ENCODE measurements at regions of chr3 and their contacts with region 1.

Region 1: GRCh38 chr3:123584988-123585937 is at the start of gene HACD2:
- DNase-seq: peak; percentile 99
- ATAC-seq: peak; percentile 86
- H3K4me3 ChIP-seq: peak within 1 kb of the TSS; percentile 85
- H3K27ac ChIP-seq: peak within 1 kb of the TSS; percentile 83
- H3K4me1 ChIP-seq: peaks cover 35% of the 10 kb centered on the region
- H3K27me3 ChIP-seq: no peaks in the 10 kb centered on the region
- CTCF ChIP-seq: no peak
- total RNA-seq, gene HACD2: 43.8 and 47.3 TPM in 2 replicates

Region 2: GRCh38 chr3:123480428-123480827 is 104.8 kb before region 1 on chr3:
- CTCF ChIA-PET with region 1: no interaction called
- POLR2A ChIA-PET with region 1: no interaction called
- intact Hi-C with region 1: no loop called
- DNase-seq: no peak
- ATAC-seq: no peak
- H3K4me3 ChIP-seq: no peak overlapping the region
- H3K27ac ChIP-seq: no peak overlapping the region
- H3K4me1 ChIP-seq: no peaks in the 10 kb centered on the region
- H3K27me3 ChIP-seq: peaks cover 42% of the 10 kb centered on the region
- CTCF ChIP-seq: no peak

Region 3: DNA sequence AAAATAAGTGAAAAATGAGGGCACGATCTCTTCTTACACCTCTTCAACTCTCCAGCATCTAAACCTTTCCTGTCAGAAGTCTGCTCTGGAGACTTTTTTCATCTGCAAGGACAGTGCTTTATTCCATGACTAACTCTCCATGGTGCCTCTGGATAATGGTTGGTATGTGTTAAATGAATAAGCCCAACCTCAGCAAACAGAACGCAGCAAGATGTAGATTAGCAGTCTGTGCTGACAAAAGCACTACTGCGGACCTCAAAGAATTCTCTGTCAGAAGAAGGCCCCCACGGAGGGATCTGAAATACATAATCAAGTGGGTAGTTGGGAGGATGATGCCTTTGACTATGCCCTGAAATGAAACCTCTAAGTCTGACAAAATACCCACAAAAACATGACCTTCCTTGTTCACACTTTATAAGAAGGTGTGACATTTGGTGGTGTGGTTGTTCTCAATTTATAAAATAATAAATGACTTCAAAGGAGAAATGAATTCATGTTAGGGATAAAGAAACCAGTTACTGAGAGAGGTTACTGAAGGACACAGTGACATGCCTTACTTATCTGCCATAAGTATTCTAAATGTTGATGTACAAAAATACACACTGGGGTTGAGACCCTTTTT is 93.2 kb before region 1 on chr3:
- CTCF ChIA-PET with region 1: no interaction called
- POLR2A ChIA-PET with region 1: no interaction called
- intact Hi-C with region 1: no loop called
- DNase-seq: no peak
- ATAC-seq: no peak
- H3K4me3 ChIP-seq: no peak overlapping the region
- H3K27ac ChIP-seq: no peak overlapping the region
- H3K4me1 ChIP-seq: no peaks in the 10 kb centered on the region
- H3K27me3 ChIP-seq: no peaks in the 10 kb centered on the region
- CTCF ChIP-seq: no peak

Region 4: DNA sequence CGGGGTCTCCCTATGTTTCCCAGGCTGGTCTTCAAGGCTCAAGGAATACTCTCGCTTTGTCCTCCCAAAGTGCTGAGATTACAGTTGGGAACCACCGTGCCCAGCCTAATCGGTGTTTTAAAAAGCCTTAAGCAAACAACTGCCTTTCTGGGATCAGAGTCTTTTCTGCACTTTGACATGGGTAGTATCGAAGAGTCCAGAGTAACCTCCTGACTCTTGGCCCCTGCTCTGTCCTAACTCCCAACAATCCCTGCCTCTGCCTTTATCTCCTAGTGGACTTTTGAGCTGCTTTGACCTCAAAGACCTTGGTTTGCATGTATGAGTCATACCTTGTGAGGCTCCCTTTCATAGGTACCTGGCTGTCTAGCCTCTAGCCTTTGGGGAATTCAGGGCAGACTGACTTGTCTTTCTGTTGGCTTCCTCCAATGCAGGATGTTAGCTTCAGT is 20.5 kb after region 1 on chr3:
- CTCF ChIA-PET with region 1: interaction called, 3 read pairs
- POLR2A ChIA-PET with region 1: interaction called, 3 read pairs
- intact Hi-C with region 1: loop called (anchors 1 kb)
- DNase-seq: peak; percentile 73
- ATAC-seq: peak; percentile 25; the same call in 1 of the 2 replicates
- H3K4me3 ChIP-seq: no peak overlapping the region
- H3K27ac ChIP-seq: peak overlapping the region; percentile 63
- H3K4me1 ChIP-seq: peaks cover 58% of the 10 kb centered on the region
- H3K27me3 ChIP-seq: no peaks in the 10 kb centered on the region
- CTCF ChIP-seq: no peak

Region 5: DNA sequence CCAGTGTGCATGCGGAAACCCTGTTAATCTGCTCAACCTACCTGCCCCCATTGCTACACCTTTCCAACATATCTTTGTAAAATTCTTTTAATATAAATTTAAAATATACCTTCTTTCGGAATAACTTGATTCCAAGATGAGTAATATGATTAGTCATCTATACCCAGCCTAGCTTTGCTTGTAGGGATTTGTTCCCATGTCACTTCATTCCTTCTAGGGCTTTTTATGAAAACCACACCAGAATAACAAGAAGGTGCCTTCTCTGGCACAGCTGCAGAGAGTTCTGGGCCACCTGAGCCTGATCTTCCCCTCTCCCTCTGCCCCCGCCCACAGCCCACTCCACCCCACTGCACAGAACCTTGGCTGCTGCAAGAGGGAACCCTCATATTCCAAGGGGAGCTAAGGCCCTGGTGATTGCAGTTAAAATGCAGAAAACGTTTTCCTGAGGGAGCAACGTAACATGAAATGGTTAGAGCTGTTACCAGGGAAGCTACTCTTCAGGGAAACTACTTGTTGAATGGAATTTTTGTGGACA is 38.1 kb after region 1 on chr3:
- CTCF ChIA-PET with region 1: no interaction called
- POLR2A ChIA-PET with region 1: no interaction called
- intact Hi-C with region 1: loop called (anchors 2 kb)
- DNase-seq: peak; percentile 87
- ATAC-seq: peak; percentile 74
- H3K4me3 ChIP-seq: no peak overlapping the region
- H3K27ac ChIP-seq: peak overlapping the region; percentile 68
- H3K4me1 ChIP-seq: peaks cover 39% of the 10 kb centered on the region
- H3K27me3 ChIP-seq: no peaks in the 10 kb centered on the region
- CTCF ChIP-seq: no peak

Region 6: GRCh38 chr3:123642182-123642956 is 57.1 kb after region 1 on chr3:
- CTCF ChIA-PET with region 1: interaction called, 5 read pairs
- POLR2A ChIA-PET with region 1: no interaction called
- intact Hi-C with region 1: loop called (anchors 5 kb)
- DNase-seq: peak; percentile 92
- ATAC-seq: peak; percentile 98
- H3K4me3 ChIP-seq: no peak overlapping the region
- H3K27ac ChIP-seq: no peak overlapping the region
- H3K4me1 ChIP-seq: peaks cover 3% of the 10 kb centered on the region; the same call in 1 of the 2 replicates
- H3K27me3 ChIP-seq: no peaks in the 10 kb centered on the region
- CTCF ChIP-seq: peak; percentile 99

Measured in PC-3 (cell line).